Activated T-helper 1 cell treated with anti-CD3 and anti-CD28 coated beads, Interleukin-12 subunit alpha, Interleukin-12 subunit beta, Interleukin-2, Interleukin-4 antibody, amounts not matched to agents 30 ng/mL and 10 ng/mL and 1 ng/mL, durations not matched to agents 14 hours and 24 hours and 36 hours (primary cell): ENCODE measurements at regions of chr2 and their contacts with region 1.

Region 1: GRCh38 chr2:44087036-44087713 is 81.5 kb upstream of the PPM1B start:
- DNase-seq: peak; percentile 77
- H3K4me3 Mint-ChIP-seq: peak overlapping the region; percentile 76
- H3K27ac Mint-ChIP-seq: peak overlapping the region; percentile 81
- H3K4me1 Mint-ChIP-seq: peaks cover 23% of the 10 kb centered on the region
- H3K27me3 Mint-ChIP-seq: no peaks in the 10 kb centered on the region

Region 2: DNA sequence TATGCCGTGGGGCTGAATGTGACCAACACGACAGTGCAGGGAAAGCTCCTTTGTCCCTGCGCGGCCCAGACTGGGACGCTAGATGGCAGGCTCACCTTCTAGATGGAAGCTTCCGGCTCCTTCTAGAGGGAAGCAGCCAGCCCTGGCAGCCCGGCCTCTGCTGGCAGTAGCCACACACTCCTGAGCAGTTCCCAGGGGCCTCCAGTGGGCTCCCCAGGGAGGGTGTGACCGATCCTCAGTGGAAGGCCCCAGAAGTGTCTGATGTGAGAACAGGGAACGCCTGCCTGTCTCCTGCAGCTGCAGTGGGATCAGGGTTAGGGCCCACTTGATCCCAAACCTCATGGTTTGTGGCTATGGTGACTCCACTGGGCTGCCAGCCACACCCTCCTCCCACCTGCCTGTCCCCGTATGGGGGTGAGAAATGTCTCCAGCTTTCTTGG is 42.9 kb before region 1 on chr2:
- intact Hi-C with region 1: loop called (anchors 1 kb)
- DNase-seq: peak; percentile 70
- H3K4me3 Mint-ChIP-seq: no peak overlapping the region
- H3K27ac Mint-ChIP-seq: no peak overlapping the region
- H3K4me1 Mint-ChIP-seq: no peaks in the 10 kb centered on the region
- H3K27me3 Mint-ChIP-seq: peaks cover 10% of the 10 kb centered on the region

Region 3: GRCh38 chr2:44205169-44205568 is 118.0 kb after region 1 on chr2:
- intact Hi-C with region 1: no loop called
- DNase-seq: no peak
- H3K4me3 Mint-ChIP-seq: no peak overlapping the region
- H3K27ac Mint-ChIP-seq: peak overlapping the region; percentile 56
- H3K4me1 Mint-ChIP-seq: peaks cover 24% of the 10 kb centered on the region
- H3K27me3 Mint-ChIP-seq: no peaks in the 10 kb centered on the region

Region 4: GRCh38 chr2:44244129-44244871 is 157.1 kb after region 1 on chr2:
- intact Hi-C with region 1: loop called (anchors 1 kb)
- DNase-seq: peak; percentile 27
- H3K4me3 Mint-ChIP-seq: peak overlapping the region; percentile 55
- H3K27ac Mint-ChIP-seq: no peak overlapping the region
- H3K4me1 Mint-ChIP-seq: peaks cover 9% of the 10 kb centered on the region
- H3K27me3 Mint-ChIP-seq: peaks cover 12% of the 10 kb centered on the region

Region 5: GRCh38 chr2:44342854-44343253 is 255.7 kb after region 1 on chr2:
- intact Hi-C with region 1: loop called (anchors 1 kb)
- DNase-seq: no peak
- H3K4me3 Mint-ChIP-seq: no peak overlapping the region
- H3K27ac Mint-ChIP-seq: no peak overlapping the region
- H3K4me1 Mint-ChIP-seq: no peaks in the 10 kb centered on the region
- H3K27me3 Mint-ChIP-seq: no peaks in the 10 kb centered on the region

Region 6: DNA sequence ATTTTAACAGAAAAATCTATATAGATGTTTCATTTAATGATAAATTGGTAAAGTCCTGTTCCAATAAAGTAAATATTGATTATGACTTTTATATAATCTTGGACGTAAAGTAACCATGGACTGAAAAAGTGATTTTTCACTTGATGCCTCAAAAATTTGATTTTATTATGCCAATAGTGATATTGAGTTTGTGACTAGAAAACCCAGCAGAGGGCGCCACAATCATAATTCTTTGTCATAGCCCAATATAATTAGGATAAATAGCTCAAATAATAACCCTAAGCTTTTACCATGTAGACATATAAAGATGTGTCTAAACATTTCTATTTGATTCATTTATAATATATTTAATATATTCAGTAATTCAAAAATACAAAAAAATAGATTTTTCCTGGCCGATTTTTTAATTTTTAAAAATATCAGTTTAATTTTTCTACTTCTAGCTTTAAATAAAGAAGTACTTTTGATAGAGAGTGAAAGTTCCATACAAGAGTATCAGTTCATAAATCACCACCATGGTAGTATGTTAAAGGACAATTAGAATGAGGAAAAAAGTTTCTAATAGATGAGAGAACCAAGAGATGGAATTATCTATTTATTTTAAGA is 305.3 kb after region 1 on chr2:
- intact Hi-C with region 1: loop called (anchors 1 kb)
- DNase-seq: no peak
- H3K4me3 Mint-ChIP-seq: no peak overlapping the region
- H3K27ac Mint-ChIP-seq: no peak overlapping the region
- H3K4me1 Mint-ChIP-seq: no peaks in the 10 kb centered on the region
- H3K27me3 Mint-ChIP-seq: no peaks in the 10 kb centered on the region

Region 7: GRCh38 chr2:44955593-44956392 is 868.6 kb after region 1 on chr2:
- intact Hi-C with region 1: loop called (anchors 1 kb)
- DNase-seq: peak; percentile 60
- H3K4me3 Mint-ChIP-seq: no peak overlapping the region
- H3K27ac Mint-ChIP-seq: no peak overlapping the region
- H3K4me1 Mint-ChIP-seq: no peaks in the 10 kb centered on the region
- H3K27me3 Mint-ChIP-seq: peaks cover 63% of the 10 kb centered on the region